Posterior vena cava (tissue), 2 donors: ENCODE measurements at regions of chr1 and their contacts with region 1.

Region 1: DNA sequence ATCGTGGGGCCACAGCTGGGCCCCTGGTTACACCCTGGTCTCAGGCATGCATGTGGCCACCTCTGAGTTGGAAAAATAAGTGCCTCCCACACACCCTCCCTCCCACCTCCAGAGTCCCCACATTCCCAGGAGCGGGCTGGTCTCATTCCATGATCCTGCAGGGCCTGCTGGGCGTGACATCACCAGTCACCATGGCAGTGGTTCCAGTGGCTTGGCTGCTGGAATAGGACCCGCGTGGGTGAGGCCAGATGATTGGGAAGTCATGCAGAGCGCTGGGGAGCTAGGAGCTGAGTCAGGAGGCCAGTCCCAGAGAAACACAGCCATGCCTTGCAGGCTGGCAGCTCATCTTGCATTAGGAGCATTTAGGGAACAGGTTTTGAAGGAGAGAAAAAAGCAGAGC is 125.4 kb upstream of the TMEM51 start:
- DNase-seq: peak; percentile 89

Region 2: DNA sequence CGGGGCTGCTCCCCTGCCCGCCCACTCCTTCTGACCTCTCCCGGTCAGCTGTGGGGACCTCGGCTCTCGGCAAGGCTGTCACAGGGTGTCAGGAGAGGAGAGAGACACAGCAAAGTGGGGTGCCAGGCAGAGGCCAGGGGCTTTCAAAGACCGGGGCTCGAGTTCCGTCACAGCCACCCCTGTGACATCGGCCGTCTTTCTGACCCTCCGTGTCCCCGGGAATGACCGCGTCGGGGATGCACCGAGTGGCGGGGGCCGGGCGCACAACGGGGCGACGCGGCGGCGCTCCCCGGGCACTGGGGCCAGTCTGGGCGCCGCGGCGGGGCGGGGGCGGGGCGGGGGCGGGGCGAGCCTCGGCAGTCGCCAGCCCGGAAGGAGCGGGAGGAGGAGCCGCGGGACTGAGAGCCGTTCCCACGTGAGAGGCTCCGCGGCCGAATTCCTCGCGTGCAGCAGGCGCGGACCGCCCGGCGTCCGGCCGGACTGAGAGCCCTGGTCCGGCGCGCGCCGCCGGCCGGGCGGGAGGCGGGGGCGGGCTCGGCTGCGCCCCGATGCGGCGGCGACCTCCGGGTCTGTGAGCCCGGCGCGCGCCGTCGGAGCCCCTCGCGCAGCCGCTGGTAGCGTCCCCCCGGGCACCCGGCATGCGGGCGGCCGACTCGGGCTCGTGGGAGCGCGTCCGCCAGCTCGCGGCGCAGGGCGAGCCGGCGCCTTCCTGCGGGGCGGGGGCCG is 104.2 kb before region 1 on chr1:
- intact Hi-C with region 1: loop called in 1 of 2 experiments (anchors 10 kb)
- DNase-seq: peak; percentile 87